ENCODE measurements at regions of chr6 and their contacts with region 1.

Region 1: DNA sequence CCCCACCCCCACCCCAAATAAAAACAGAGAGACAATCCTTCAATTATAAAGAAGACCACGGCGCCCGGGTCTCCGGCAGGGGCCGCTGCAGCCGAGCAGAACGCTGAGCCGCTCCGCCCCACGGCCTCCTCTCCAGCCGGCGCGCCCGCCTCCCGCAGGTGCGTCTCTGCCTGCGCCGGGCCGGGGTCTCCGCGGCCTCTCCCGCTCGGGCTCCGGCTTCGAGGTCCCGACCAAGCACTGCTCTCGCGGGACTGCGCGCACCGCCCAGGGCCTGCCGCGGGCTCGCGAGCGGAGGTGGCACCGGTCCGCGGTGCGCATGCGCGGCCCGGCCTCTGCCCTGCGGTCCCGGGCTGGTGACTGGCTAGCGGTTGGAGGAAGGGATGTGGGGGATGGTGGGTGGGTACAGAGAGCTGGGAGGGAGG is 241 bp upstream of the SIRT5 start:
- DNase-seq: peak; percentile 94
- ATAC-seq: peak; percentile 82
- H3K4me3 Mint-ChIP-seq: peak overlapping the region; percentile 98
- H3K27ac Mint-ChIP-seq: peak overlapping the region; percentile 99
- H3K4me1 Mint-ChIP-seq: peaks cover 24% of the 10 kb centered on the region
- H3K27me3 Mint-ChIP-seq: no peaks in the 10 kb centered on the region
- CTCF ChIP-seq: peak; percentile 52

Region 2: DNA sequence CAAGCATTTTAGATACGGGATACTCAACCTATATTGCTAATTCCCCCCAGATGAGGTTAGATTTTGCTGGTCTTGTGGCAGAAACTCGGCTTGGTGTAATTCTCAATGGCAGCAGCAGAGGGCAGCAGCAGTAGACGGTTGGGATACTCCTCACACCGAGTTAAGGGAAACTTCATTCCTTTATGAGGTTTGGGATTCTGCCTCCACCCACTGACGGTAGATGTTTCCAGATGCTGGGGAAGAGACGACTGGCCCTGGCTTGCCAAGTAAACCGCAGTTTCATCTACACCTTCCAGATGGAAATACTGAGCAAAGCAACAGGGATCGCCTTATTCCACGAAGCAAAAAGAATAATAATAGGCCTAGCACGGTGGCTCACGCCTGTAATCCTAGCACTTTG is 237.6 kb before region 1 on chr6:
- CTCF ChIA-PET with region 1: interaction called, 27 read pairs
- POLR2A ChIA-PET with region 1: interaction called, 7 read pairs
- intact Hi-C with region 1: loop called (anchors 5 kb)
- DNase-seq: peak; percentile 88
- ATAC-seq: peak; percentile 86
- H3K4me3 Mint-ChIP-seq: no peak overlapping the region
- H3K27ac Mint-ChIP-seq: no peak overlapping the region
- H3K4me1 Mint-ChIP-seq: peaks cover 4% of the 10 kb centered on the region
- H3K27me3 Mint-ChIP-seq: no peaks in the 10 kb centered on the region
- CTCF ChIP-seq: peak; percentile 97

Region 3: DNA sequence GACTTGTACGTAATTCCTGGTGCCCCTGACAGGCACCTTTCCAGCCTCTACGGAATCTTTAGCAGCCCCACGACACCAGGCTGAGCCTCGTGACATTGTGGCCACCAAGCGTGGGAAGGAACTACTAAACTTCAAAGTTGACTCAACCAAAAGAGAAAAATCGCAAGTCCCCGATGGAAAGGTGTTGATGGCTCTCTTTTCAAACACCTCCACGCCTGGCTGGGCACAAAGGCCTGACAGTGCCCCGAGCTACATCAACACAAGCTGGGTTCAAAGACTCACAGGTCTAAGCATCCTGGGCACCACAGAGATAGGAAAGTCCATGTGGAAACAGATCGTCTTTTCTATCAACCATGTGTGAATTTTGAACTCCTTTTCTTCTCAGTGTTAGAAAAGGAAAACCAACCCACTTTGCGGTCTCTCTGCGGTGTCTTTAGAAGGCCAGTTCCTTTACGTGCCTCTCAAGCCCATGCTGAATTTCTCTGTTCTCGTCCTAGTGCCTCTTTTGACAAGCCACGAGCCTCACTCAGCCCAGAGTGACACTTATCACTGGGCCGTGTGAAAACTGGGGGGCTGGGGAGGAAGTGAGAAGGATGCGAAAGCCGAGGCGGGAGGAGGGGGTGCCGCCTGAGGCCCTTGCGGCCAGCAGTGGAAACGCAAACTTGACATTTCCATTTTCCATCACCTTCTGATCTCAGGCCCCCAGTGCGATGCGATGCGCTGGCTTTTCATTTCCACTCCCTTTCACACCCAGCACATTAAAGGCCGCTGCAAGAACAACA is 146.2 kb before region 1 on chr6:
- CTCF ChIA-PET with region 1: interaction called, 8 read pairs
- POLR2A ChIA-PET with region 1: interaction called, 4 read pairs
- intact Hi-C with region 1: loop called (anchors 10 kb)
- DNase-seq: peak; percentile 94
- ATAC-seq: peak; percentile 78
- H3K4me3 Mint-ChIP-seq: peak overlapping the region; percentile 54
- H3K27ac Mint-ChIP-seq: peak overlapping the region; percentile 97
- H3K4me1 Mint-ChIP-seq: peaks cover 82% of the 10 kb centered on the region
- H3K27me3 Mint-ChIP-seq: no peaks in the 10 kb centered on the region
- CTCF ChIP-seq: peak; percentile 47

Region 4: GRCh38 chr6:13559251-13559650 is 14.9 kb before region 1 on chr6:
- CTCF ChIA-PET with region 1: interaction called, 38 read pairs
- POLR2A ChIA-PET with region 1: interaction called, 10 read pairs
- intact Hi-C with region 1: no loop called
- DNase-seq: no peak
- ATAC-seq: no peak
- H3K4me3 Mint-ChIP-seq: no peak overlapping the region
- H3K27ac Mint-ChIP-seq: no peak overlapping the region
- H3K4me1 Mint-ChIP-seq: no peaks in the 10 kb centered on the region
- H3K27me3 Mint-ChIP-seq: no peaks in the 10 kb centered on the region
- CTCF ChIP-seq: no peak

Region 5: DNA sequence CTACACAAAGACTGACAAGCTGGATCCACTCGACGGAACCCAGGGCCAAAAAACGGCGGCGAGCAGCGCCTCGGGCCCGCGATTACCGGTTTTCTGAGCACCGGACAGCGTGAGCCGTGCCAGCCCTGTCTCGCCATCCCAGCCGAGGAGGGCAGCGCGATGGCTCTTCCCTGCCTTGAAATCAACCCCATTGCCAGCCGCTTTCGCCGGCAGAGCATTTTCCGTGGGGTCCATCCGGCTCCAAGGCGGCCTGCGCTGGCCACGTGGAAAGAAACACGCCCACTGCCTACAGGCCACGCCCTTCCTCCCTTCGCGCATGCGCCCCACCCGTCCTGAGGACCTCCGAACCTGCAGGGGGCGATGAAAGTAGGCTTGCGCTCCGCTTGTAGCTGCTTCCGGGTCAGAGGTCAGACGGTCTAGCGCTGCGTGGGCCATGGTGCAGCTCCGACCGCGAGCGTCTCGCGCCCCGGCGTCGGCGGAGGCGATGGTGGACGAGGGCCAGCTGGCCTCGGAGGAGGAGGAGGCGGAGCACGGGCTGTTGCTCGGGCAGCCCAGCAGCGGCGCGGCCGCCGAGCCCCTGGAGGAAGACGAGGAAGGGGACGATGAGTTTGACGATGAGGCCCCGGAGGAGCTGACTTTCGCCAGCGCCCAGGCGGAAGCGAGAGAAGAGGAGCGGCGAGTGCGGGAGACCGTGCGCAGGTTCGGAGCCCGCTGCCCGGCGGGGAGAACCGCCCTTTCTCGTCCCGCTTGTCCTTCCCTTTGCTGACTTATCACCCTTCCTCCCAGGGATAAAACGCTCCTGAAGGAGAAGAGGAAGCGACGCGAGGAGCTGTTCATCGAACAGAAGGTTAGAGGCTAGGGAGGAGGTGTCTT is 41.0 kb after region 1 on chr6 and contains the start of gene NOL7:
- CTCF ChIA-PET with region 1: interaction called, 25 read pairs
- POLR2A ChIA-PET with region 1: interaction called, 21 read pairs
- intact Hi-C with region 1: no loop called
- DNase-seq: peak; percentile 98
- ATAC-seq: peak; percentile 95
- H3K4me3 Mint-ChIP-seq: peak within 1 kb of the TSS; percentile 99
- H3K27ac Mint-ChIP-seq: peak within 1 kb of the TSS; percentile 96
- H3K4me1 Mint-ChIP-seq: peaks cover 36% of the 10 kb centered on the region
- H3K27me3 Mint-ChIP-seq: no peaks in the 10 kb centered on the region
- CTCF ChIP-seq: peak; percentile 88
- total RNA-seq, gene NOL7: 95.2 to 95.8 TPM

Measured in activated CD8-positive, alpha-beta T cell treated with anti-CD3 and anti-CD28 coated beads for 36 hours (primary cell).